PC-3 (cell line): ENCODE measurements at regions of chr14 and their contacts with region 1.

Region 1: GRCh38 chr14:31877255-31877798 is 199.8 kb upstream of the ARHGAP5 start:
- DNase-seq: no peak
- ATAC-seq: no peak
- H3K4me3 ChIP-seq: no peak overlapping the region
- H3K27ac ChIP-seq: no peak overlapping the region
- H3K4me1 ChIP-seq: peaks cover 19% of the 10 kb centered on the region
- H3K27me3 ChIP-seq: no peaks in the 10 kb centered on the region
- CTCF ChIP-seq: no peak

Region 2: DNA sequence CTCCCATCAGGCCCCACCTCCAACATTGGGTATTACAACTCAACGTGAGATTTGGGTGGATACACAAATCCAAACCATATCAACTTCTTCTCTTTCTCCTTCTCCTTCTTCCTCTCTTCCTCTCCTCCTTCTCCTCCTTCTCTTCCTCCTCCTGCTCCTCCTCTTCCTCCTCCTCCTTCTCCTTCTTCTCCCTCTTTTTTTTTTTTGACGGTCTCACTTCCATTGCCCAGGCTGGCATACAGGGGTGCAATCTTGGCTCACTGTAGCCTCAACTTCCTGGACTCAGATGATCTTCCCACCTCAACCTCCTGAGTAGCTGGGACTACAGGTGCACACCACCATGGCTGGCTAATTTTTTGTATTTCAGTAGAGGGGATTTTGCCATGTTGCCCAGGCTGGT is 327.5 kb before region 1 on chr14:
- CTCF ChIA-PET with region 1: no interaction called
- POLR2A ChIA-PET with region 1: no interaction called
- intact Hi-C with region 1: no loop called
- DNase-seq: no peak
- ATAC-seq: no peak
- H3K4me3 ChIP-seq: no peak overlapping the region
- H3K27ac ChIP-seq: no peak overlapping the region
- H3K4me1 ChIP-seq: no peaks in the 10 kb centered on the region
- H3K27me3 ChIP-seq: peaks cover 29% of the 10 kb centered on the region
- CTCF ChIP-seq: no peak

Region 3: DNA sequence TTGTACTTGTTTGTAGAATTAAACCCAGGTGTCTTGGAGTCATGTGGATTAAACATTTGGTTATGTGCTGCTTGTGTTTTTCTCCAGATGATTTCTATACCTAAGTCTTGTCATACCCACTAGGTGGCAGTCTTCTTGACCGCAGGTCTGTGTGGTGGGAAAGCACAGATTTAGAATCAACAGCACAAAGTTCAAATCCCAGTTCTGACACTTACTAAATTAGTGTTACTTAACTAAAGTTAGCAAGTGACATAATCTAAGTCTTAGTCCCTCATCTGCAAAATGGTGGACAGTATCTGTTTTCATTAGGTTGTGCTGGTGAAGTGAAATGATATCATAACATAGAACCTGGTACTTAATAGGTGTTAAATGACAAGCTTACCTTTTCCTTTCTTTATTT is 48.8 kb after region 1 on chr14:
- CTCF ChIA-PET with region 1: no interaction called
- POLR2A ChIA-PET with region 1: no interaction called
- intact Hi-C with region 1: loop called (anchors 5 kb)
- DNase-seq: peak; percentile 64
- ATAC-seq: no peak
- H3K4me3 ChIP-seq: no peak overlapping the region
- H3K27ac ChIP-seq: no peak overlapping the region
- H3K4me1 ChIP-seq: peaks cover 20% of the 10 kb centered on the region; the same call in 1 of the 2 replicates
- H3K27me3 ChIP-seq: no peaks in the 10 kb centered on the region
- CTCF ChIP-seq: peak; percentile 89